ENCODE measurements at regions of chr2 and their contacts with region 1.

Region 1: GRCh38 chr2:54522624-54523281 is 66.6 kb downstream of the SPTBN1 start:
- DNase-seq: peak in 1 of 2 donors; percentile 57
- ATAC-seq: peak in 6 of 8 donors; percentile 28 to 55 (median 46)
- H3K4me3 ChIP-seq: no peak overlapping the region
- H3K27ac ChIP-seq: peak overlapping the region in 5 of 10 donors; percentile 70 to 86 (median 76)
- H3K4me1 ChIP-seq: peaks cover 21 to 99% (median 95%) of the 10 kb centered on the region in 9 donors
- H3K27me3 ChIP-seq: no peaks in the 10 kb centered on the region
- CTCF ChIP-seq: peak; percentile 26 to 74 (median 66)

Region 2: GRCh38 chr2:54206596-54206995 is 316.2 kb before region 1 on chr2:
- intact Hi-C with region 1: loop called in 1 of 10 experiments (anchors 10 kb)
- DNase-seq: no peak
- ATAC-seq: peak in 4 of 8 donors; percentile 34 to 66 (median 42)
- H3K4me3 ChIP-seq: no peak overlapping the region
- H3K27ac ChIP-seq: peak overlapping the region in 1 of 10 donors; percentile 84
- H3K4me1 ChIP-seq: peaks cover 2 to 36% (median 33%) of the 10 kb centered on the region in 9 donors
- H3K27me3 ChIP-seq: no peaks in the 10 kb centered on the region
- CTCF ChIP-seq: peak; percentile 50 to 87 (median 71)

Region 3: DNA sequence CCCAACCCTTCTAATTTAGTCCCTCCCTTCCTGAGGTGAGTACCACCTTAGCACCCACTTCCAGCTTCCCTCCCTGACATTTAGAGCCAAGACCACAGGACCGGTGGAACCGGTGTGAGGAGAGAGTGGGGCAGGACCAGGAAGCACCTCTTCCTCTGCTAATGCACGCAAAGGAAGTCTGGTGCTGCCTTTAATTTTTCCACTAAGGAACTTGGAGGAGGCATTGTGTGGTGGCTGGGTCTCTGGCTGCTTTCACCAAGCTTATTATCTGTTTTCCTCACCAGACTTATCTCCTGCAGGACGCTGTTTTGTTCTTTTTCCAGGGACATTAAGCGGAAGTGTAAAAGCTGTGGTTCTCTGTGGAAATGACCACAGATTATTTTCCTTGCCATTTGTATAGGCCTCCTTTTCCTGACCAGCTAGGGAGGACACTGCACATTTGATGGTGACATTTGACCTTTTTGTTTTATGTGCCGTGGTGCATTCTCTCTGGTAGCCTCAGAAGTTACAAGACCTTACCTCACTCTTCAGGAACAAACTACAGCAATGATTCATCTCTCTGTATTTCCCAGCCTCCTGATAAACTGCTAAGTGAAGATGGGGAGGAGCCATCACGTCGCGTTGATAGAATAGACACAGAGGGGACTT is 106.5 kb before region 1 on chr2:
- intact Hi-C with region 1: no loop called
- DNase-seq: peak in 1 of 2 donors; percentile 59
- ATAC-seq: peak; percentile 71 to 86 (median 82)
- H3K4me3 ChIP-seq: no peak overlapping the region
- H3K27ac ChIP-seq: peak overlapping the region; percentile 21 to 88 (median 78)
- H3K4me1 ChIP-seq: peaks cover 12 to 62% (median 51%) of the 10 kb centered on the region in 9 donors
- H3K27me3 ChIP-seq: no peaks in the 10 kb centered on the region
- CTCF ChIP-seq: no peak

Region 4: DNA sequence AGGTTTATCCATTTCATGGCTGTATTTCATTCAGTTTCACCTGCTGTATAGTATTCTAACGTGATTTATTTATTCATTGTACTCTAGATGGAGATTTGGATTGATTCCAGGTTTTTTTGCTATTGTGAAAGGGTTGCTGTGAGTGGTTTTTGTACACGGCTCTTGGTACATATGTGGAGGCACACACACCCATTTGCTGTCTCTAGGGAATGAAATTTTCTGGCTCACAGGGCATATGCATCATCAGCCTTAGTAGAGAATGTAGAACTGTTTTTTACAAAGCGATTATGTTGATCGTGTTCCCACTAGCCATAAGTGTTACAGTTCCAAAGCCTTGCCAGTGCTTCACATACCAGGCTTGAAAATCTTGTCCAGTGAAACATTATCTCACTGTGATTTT is 61.5 kb before region 1 on chr2:
- intact Hi-C with region 1: loop called in 1 of 10 experiments (anchors 5 kb)
- DNase-seq: no peak
- ATAC-seq: peak in 5 of 8 donors; percentile 11 to 50 (median 41)
- H3K4me3 ChIP-seq: peak overlapping the region in 2 of 10 donors; percentile 0 to 79
- H3K27ac ChIP-seq: peak overlapping the region in 9 of 10 donors; percentile 30 to 98 (median 75)
- H3K4me1 ChIP-seq: peaks cover 12 to 85% (median 72%) of the 10 kb centered on the region in 9 donors
- H3K27me3 ChIP-seq: peaks cover 0 to 30% (median 0%) of the 10 kb centered on the region in 7 donors
- CTCF ChIP-seq: no peak

Region 5: GRCh38 chr2:54618646-54619565 is 96.2 kb after region 1 on chr2:
- intact Hi-C with region 1: loop called in 2 of 10 experiments (anchors 5 to 10 kb)
- DNase-seq: no peak
- ATAC-seq: peak in 7 of 8 donors; percentile 16 to 57 (median 42)
- H3K4me3 ChIP-seq: no peak overlapping the region
- H3K27ac ChIP-seq: peak overlapping the region; percentile 10 to 89 (median 72)
- H3K4me1 ChIP-seq: peaks cover 20 to 87% (median 78%) of the 10 kb centered on the region in 9 donors
- H3K27me3 ChIP-seq: no peaks in the 10 kb centered on the region
- CTCF ChIP-seq: no peak

Region 6: GRCh38 chr2:54648256-54648655 is 125.5 kb after region 1 on chr2:
- intact Hi-C with region 1: loop called in 4 of 10 experiments (anchors 5 to 10 kb)
- DNase-seq: no peak
- ATAC-seq: peak in 4 of 8 donors; percentile 36 to 52 (median 42)
- H3K4me3 ChIP-seq: no peak overlapping the region
- H3K27ac ChIP-seq: peak overlapping the region in 1 of 10 donors; percentile 13
- H3K4me1 ChIP-seq: peaks cover 0 to 4% (median 1%) of the 10 kb centered on the region in 9 donors
- H3K27me3 ChIP-seq: no peaks in the 10 kb centered on the region
- CTCF ChIP-seq: no peak

Region 7: GRCh38 chr2:54657664-54658083 is 134.9 kb after region 1 on chr2:
- intact Hi-C with region 1: loop called in 1 of 10 experiments (anchors 10 kb)
- DNase-seq: no peak
- ATAC-seq: peak; percentile 55 to 79 (median 66)
- H3K4me3 ChIP-seq: no peak overlapping the region
- H3K27ac ChIP-seq: peak overlapping the region in 9 of 10 donors; percentile 2 to 75 (median 50)
- H3K4me1 ChIP-seq: peaks cover 0 to 46% (median 24%) of the 10 kb centered on the region in 9 donors
- H3K27me3 ChIP-seq: no peaks in the 10 kb centered on the region
- CTCF ChIP-seq: peak in 8 of 9 donors; percentile 29 to 69 (median 61)

Measured in heart right ventricle (tissue), 16 donors.